Cardiac septum (tissue), 1 donor: ENCODE measurements at regions of chr21 and their contacts with region 1.

Region 1: GRCh38 chr21:28633839-28634555 is 358.7 kb downstream of the LTN1 start:
- DNase-seq: peak; percentile 74

Region 2: DNA sequence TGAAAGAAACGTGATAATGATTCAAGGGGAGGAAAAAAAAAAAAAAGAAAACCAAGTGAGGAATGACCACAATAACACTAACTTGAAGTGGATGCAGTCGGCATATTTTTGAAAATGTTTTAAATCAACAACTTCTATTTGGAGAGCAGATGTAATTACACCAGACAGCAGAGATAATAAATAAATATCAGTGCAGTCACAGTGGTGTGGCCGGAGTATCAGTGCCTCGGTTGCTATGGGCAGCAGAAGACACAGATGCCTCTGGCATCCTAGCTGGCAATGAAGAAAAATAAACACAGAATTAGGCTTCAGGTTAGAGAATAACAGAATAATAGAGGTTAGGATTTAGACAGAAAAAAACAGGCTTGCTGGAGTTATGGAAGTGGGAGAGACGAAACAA is 529.7 kb before region 1 on chr21:
- intact Hi-C with region 1: no loop called
- DNase-seq: no peak

Region 3: DNA sequence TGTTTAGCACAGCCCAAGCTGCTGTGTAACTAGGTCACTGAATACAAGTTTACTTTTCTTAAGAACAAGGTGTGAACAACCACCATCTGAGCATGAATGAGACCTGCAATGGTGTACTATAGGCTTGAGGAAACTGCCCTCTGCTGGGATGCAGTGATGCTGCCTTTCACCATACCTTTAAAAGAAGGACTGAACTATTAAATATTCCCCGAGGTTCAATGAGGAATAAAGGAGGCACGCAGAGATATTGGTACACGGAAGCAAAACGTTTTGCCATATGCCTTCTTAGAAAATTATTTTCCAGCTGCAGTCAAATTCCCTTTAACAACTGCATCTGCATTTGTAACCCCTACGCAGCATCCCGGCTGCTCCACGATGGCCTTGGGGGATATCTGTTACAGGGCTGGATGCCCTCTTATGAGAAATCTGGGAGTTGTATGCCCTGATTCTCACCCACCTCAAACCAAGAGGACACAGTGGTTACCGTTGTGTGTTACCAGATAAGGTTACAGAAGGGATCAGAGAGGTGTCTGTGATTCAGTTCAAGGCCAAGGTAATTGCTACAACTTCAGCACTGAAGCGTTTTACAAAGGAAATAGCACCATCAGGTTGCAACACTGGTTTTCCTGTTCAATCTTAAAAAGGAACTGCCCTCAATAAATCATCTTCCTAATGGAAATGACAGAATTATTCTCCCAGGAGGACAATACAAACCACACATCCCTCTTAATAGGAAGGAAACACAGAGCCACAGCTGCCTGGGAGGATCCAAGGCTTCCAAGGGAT is 111.8 kb before region 1 on chr21:
- intact Hi-C with region 1: loop called (anchors 2 kb)
- DNase-seq: no peak

Region 4: GRCh38 chr21:28884976-28885852 is 251.2 kb after region 1 on chr21:
- intact Hi-C with region 1: no loop called
- DNase-seq: peak; percentile 93